ENCODE measurements at regions of chr21 and their contacts with region 1.

Region 1: DNA sequence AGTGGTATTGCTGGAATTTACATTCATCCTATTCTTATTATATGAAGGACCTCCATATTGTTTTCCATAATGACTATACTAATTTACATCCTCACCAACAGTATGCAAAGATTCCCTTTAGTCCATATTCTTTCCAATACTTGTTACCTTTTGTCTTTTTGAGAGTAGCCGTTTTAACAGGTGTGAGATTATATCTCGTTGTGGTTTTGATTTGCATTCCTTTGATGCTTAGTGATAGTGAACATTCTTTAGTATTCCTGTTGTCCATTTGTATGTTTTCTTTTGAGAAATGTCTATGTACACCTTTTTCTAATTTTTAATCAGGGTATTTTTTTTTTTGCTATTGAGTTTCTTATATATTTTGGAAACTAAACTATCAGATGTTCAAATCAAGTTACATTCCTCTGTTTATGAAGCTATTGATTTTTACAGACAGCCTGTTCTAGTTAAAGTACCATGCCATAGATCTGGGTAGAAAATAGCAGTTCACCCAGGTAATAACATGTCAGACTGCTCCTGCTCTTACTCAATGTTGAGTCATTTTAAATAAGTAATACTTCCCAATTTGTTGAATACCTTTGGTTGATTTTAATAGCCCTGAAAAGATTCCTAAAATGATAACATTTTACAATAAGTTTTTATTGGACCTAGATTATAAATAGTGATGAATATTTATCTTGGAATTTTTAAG is 1108.7 kb downstream of the NCAM2 start:
- DNase-seq: no peak

Region 2: DNA sequence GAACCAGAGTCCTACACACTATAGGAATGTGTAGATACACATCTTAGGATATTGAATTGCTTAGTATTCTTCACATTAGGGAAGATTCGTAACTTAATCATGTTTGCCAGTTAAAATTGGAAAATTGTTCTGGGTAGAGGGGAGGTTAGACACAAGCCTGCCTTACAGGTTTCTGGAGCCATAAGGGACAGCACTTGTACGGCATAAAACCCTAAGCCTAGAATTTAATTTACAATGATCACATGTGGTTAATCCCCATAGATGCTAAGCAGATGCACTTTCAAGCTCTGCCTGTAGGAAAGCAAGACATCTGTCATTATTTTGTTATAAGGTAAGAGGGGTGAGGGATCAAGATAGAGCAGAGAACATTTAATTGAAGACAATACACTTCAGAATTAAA is 288.0 kb before region 1 on chr21:
- intact Hi-C with region 1: no loop called
- DNase-seq: no peak

Region 3: DNA sequence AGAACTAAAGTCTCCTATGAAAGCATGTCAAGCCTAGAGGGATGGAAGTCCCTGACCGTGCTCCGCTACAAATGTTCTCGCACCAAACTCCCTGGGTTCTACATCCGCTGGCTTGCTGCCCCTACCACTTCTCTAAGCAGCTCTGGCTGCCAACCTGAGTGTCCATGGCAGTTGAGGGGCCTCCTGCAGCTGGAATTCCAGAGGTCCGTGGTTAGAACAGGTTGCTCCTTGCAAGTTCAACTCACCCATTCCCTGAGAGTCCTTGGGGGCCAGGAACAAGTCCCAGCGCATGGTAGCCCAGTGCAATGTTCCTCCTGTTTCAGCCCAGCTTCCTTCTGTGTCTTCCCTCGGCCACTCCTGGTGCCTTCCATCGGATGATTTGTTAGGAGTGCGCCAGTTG is 65.9 kb before region 1 on chr21:
- intact Hi-C with region 1: loop called in 1 of 2 experiments (anchors 10 kb)
- DNase-seq: no peak